Endothelial cell of umbilical vein (primary cell): ENCODE measurements at regions of chr14 and their contacts with region 1.

Region 1: GRCh38 chr14:38989922-38990546 is 113.0 kb downstream of the SEC23A start:
- DNase-seq: peak; percentile 15
- H3K4me3 ChIP-seq: no peak overlapping the region
- H3K27ac ChIP-seq: no peak overlapping the region
- H3K4me1 ChIP-seq: peaks cover 38% of the 10 kb centered on the region
- H3K27me3 ChIP-seq: no peaks in the 10 kb centered on the region
- CTCF ChIP-seq: no peak
- POLR2A ChIP-seq: no peak

Region 2: GRCh38 chr14:38309522-38310277 is 680.3 kb before region 1 on chr14:
- CTCF ChIA-PET with region 1: no interaction called
- POLR2A ChIA-PET with region 1: no interaction called
- dilution Hi-C with region 1: no loop called
- intact Hi-C with region 1: loop called (anchors 2 kb)
- DNase-seq: no peak
- H3K4me3 ChIP-seq: peak overlapping the region in 1 of 3 experiments; percentile 23
- H3K27ac ChIP-seq: peak overlapping the region; percentile 74
- H3K4me1 ChIP-seq: peaks cover 40% of the 10 kb centered on the region
- H3K27me3 ChIP-seq: no peaks in the 10 kb centered on the region
- CTCF ChIP-seq: no peak
- POLR2A ChIP-seq: no peak

Region 3: GRCh38 chr14:38880643-38881524 is 109.2 kb before region 1 on chr14:
- CTCF ChIA-PET with region 1: no interaction called
- POLR2A ChIA-PET with region 1: no interaction called
- dilution Hi-C with region 1: no loop called
- intact Hi-C with region 1: loop called (anchors 1 kb)
- DNase-seq: peak; percentile 92
- H3K4me3 ChIP-seq: no peak overlapping the region
- H3K27ac ChIP-seq: no peak overlapping the region
- H3K4me1 ChIP-seq: no peaks in the 10 kb centered on the region
- H3K27me3 ChIP-seq: no peaks in the 10 kb centered on the region
- CTCF ChIP-seq: no peak
- POLR2A ChIP-seq: no peak

Region 4: GRCh38 chr14:39005044-39005880 is 15.2 kb after region 1 on chr14:
- CTCF ChIA-PET with region 1: no interaction called
- POLR2A ChIA-PET with region 1: no interaction called
- dilution Hi-C with region 1: no loop called
- intact Hi-C with region 1: no loop called
- DNase-seq: no peak
- H3K4me3 ChIP-seq: no peak overlapping the region
- H3K27ac ChIP-seq: no peak overlapping the region
- H3K4me1 ChIP-seq: no peaks in the 10 kb centered on the region
- H3K27me3 ChIP-seq: no peaks in the 10 kb centered on the region
- CTCF ChIP-seq: no peak
- POLR2A ChIP-seq: no peak